Body of pancreas (tissue), 4 donors: ENCODE measurements at regions of chr11 and their contacts with region 1.

Region 1: GRCh38 chr11:9015677-9016076 is 11.9 kb upstream of the NRIP3 start:
- DNase-seq: peak; percentile 70 to 87 (median 82)
- ATAC-seq: peak; percentile 76
- H3K4me3 ChIP-seq: no peak overlapping the region
- H3K27ac ChIP-seq: no peak overlapping the region
- H3K4me1 ChIP-seq: peaks cover 5% of the 10 kb centered on the region
- H3K27me3 ChIP-seq: no peaks in the 10 kb centered on the region
- CTCF ChIP-seq: peak; percentile 64 to 86 (median 82)
- POLR2A ChIP-seq: no peak

Region 2: DNA sequence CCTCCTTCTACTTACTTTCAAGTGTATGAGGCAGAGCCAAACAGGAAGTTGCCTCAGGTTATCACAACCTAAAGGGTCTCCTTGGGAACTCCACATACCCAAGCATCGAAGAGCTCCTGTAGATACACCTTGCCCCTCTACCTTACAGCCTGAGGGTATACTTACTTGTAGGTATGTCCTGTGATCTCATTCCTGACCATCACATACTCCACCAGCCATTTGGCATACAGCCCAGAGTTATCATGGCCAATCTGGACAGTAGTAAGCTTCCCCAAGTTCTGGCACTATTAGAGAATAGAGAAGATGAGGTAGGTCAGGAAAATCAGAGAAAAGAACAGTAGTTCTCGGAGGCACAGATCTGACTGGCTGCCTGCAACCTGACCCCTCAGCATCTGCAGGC is 129.2 kb after region 1 on chr11:
- intact Hi-C with region 1: loop called (anchors 5 kb)
- DNase-seq: no peak
- ATAC-seq: no peak
- H3K4me3 ChIP-seq: no peak overlapping the region
- H3K27ac ChIP-seq: no peak overlapping the region
- H3K4me1 ChIP-seq: peaks cover 10% of the 10 kb centered on the region
- H3K27me3 ChIP-seq: no peaks in the 10 kb centered on the region
- CTCF ChIP-seq: no peak
- POLR2A ChIP-seq: no peak

Region 3: DNA sequence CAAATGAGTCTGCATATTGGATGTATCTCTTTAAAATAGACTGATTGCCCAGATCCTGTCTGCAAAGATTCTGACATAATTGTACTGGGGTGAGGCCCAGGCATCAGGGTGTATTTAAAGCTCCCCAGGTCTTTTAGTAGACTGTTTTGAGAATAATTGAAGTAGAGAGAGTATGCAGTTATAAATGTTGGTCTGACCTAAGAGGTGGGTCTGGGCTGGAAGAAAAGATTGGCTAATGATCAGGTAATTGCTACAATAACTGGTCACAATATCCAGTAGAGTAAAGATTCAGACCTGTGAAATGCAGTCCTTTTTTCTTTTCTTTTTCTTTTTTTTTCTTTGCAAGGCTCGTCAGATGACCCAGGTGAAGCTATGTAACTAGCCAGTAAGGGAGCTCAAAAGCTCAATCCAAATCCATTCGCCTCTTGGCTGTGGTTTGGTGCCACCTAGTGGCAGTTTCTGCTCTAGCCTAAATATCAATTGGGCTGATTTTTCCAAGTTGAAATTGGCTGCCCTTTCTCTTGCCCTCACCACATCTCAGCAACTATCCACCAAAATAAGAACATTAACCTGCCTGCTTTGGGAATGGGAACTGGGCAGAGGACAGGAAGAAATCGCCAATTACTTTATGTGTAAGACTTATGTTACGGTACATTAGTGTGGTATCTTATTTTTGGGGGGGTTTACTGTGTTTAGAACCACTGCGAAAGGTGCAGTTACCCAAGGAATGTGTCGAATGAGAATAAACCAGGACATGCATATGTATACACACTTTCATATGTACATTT is 491.0 kb after region 1 on chr11:
- intact Hi-C with region 1: loop called (anchors 10 kb)
- DNase-seq: peak; percentile 73 to 85 (median 78)
- ATAC-seq: peak; percentile 84
- H3K4me3 ChIP-seq: no peak overlapping the region
- H3K27ac ChIP-seq: no peak overlapping the region
- H3K4me1 ChIP-seq: peaks cover 12% of the 10 kb centered on the region
- H3K27me3 ChIP-seq: no peaks in the 10 kb centered on the region
- CTCF ChIP-seq: peak; percentile 80 to 97 (median 91)
- POLR2A ChIP-seq: no peak